Astrocyte of the cerebellum (primary cell): ENCODE measurements at regions of chr17 and their contacts with region 1.

Region 1: GRCh38 chr17:72985881-72986720 is 106.4 kb downstream of the SLC39A11 start:
- DNase-seq: peak; percentile 67
- H3K4me3 ChIP-seq: no peak overlapping the region
- CTCF ChIP-seq: peak; percentile 89

Region 2: DNA sequence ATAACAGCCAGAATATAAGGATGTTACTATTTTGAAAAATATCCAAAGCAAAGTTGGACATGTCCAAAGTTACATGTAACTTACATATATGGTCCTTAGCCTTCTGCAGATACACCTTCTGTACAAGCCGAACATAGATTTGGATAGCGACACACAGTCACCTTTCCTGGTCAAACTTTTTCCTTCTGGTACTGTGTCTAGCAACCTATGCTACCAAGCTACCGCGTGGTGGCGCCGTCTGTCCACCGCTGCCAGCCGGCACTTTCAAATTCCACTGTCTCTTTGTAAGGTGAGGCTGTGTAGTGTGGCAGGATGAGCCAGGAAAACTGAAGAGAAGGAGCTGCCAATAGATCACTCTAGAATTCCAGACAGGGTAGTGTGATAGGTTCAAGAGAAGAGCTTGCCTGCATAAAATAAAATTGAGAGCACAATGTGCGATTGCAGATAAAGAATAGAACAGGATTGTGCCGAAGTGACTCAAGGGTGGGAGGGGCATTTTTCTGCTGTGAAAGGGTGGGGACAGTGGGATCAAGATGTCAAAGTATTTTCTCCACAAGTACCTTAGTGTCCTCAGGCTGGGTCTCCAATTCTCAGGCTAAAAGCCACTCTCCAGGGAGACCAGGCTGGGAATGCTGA is 260.6 kb before region 1 on chr17:
- in situ Hi-C with region 1: loop called (anchors 10 kb)
- DNase-seq: peak; percentile 41
- H3K4me3 ChIP-seq: no peak overlapping the region
- CTCF ChIP-seq: peak; percentile 96